ENCODE measurements at regions of chr20 and their contacts with region 1.

Region 1: DNA sequence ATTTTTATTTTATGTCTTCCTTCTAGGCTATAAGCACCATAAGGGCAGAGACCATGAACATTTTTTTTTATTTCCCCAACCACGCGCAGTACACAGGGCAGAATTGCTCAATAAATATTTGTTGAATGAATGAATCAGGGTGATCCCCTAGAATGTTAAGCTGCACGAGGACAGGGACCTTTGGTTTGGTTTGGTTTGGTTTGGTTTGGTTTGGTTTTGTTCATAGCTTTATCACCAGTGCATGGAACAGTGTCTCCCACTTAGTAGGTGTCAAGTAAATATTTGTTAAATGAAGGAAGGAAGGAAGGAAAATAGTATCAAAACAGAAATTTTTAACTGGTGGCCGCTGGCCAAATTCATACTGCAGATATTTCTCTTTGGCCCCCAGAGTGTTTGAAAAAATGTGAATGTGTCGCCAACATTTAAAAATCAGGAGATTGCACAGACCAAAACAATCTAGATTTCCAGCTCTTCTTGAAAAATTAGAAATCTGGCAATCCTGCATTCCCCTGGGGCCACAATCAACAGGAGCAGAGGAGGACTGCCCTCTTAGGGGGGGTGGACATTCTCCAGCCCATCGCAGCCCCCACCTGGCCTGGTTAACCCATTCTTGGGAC is 205.3 kb downstream of the EYA2 start:
- DNase-seq: peak; percentile 49 to 71
- H3K4me3 ChIP-seq: no peak overlapping the region
- H3K27ac ChIP-seq: no peak overlapping the region
- H3K4me1 ChIP-seq: peaks cover 0 to 22% (median 10%) of the 10 kb centered on the region in 4 donors
- H3K27me3 ChIP-seq: no peaks in the 10 kb centered on the region
- CTCF ChIP-seq: no peak

Region 2: GRCh38 chr20:46883892-46884291 is 216.0 kb before region 1 on chr20:
- intact Hi-C with region 1: loop called (anchors 10 kb)
- DNase-seq: no peak
- H3K4me3 ChIP-seq: no peak overlapping the region
- H3K27ac ChIP-seq: no peak overlapping the region
- H3K4me1 ChIP-seq: no peaks in the 10 kb centered on the region
- H3K27me3 ChIP-seq: peaks cover 0 to 17% of the 10 kb centered on the region in 2 donors
- CTCF ChIP-seq: no peak

Region 3: DNA sequence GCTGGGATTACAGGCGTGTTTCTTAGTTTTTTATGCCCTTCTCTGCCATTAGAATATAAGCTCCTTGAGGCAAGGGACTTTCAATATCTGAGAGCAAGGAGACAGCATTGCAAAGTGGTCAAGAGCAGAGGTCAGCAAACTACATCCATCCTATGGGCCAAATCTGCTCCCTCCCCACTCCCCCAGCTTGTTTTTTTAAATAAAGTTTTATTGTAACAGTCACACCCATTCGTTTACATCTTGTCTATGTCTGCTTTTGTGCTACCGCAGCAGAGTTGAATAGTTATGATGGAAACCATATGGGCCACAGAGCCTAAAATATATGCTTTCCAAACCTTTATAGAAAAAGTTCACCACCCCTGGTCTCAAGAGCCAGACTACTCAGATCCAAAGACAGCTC is 22.6 kb after region 1 on chr20:
- intact Hi-C with region 1: loop called (anchors 2 kb)
- DNase-seq: no peak
- H3K4me3 ChIP-seq: no peak overlapping the region
- H3K27ac ChIP-seq: no peak overlapping the region
- H3K4me1 ChIP-seq: peaks cover 0 to 32% (median 14%) of the 10 kb centered on the region in 4 donors
- H3K27me3 ChIP-seq: no peaks in the 10 kb centered on the region
- CTCF ChIP-seq: no peak

Measured in tibial artery (tissue), 4 donors.